H1 (cell line): ENCODE measurements at regions of chr13 and their contacts with region 1.

Region 1: GRCh38 chr13:46010148-46010547 is 42.4 kb downstream of the ZC3H13 start:
- DNase-seq: no peak
- H3K4me3 ChIP-seq: no peak overlapping the region
- H3K27ac ChIP-seq: no peak overlapping the region
- H3K4me1 ChIP-seq: no peaks in the 10 kb centered on the region
- H3K27me3 ChIP-seq: no peaks in the 10 kb centered on the region
- CTCF ChIP-seq: peak in 2 of 3 experiments; percentile 37 to 48; a peak in 2 of 4 replicates
- EP300 ChIP-seq: no peak
- POLR2A ChIP-seq: no peak
- RAD21 ChIP-seq: peak; percentile 34 to 45; a peak in 3 of 4 replicates

Region 2: DNA sequence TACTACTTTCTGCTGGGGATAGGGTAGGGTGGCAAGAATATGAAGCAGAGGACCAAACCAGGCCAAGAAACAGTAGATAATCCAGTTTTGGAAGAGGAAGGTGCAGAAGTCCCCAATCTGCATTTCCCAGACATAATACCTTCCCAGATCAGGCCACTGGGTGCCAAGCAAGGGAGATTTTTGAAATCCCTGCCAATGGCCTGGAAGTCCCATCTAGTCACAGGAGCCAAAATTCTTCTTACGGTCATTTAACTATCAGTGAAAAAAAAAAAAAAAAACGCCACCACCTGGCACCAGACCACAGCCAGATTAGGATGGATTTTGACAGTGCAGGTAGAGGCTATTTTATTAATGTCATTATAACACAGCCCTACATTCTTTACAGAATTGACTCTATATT is 15.4 kb before region 1 on chr13:
- CTCF ChIA-PET with region 1: interaction called, 11 read pairs
- POLR2A ChIA-PET with region 1: no interaction called
- DNase-seq: no peak
- H3K4me3 ChIP-seq: no peak overlapping the region
- H3K27ac ChIP-seq: no peak overlapping the region
- H3K4me1 ChIP-seq: no peaks in the 10 kb centered on the region
- H3K27me3 ChIP-seq: no peaks in the 10 kb centered on the region
- CTCF ChIP-seq: no peak
- EP300 ChIP-seq: no peak
- POLR2A ChIP-seq: no peak
- RAD21 ChIP-seq: no peak